ENCODE measurements at regions of chr16 and their contacts with region 1.

Region 1: GRCh38 chr16:78503602-78504001 is 404.1 kb downstream of the WWOX start:
- DNase-seq: peak in 1 of 2 experiments; percentile 20
- H3K4me3 ChIP-seq: no peak overlapping the region
- H3K27ac ChIP-seq: no peak overlapping the region
- H3K4me1 ChIP-seq: no peaks in the 10 kb centered on the region
- H3K27me3 ChIP-seq: no peaks in the 10 kb centered on the region
- CTCF ChIP-seq: peak; percentile 89

Region 2: GRCh38 chr16:78310196-78310595 is 193.4 kb before region 1 on chr16:
- CTCF ChIA-PET with region 1: interaction called, 12 read pairs
- POLR2A ChIA-PET with region 1: no interaction called
- intact Hi-C with region 1: no loop called
- DNase-seq: no peak
- H3K4me3 ChIP-seq: no peak overlapping the region
- H3K27ac ChIP-seq: no peak overlapping the region
- H3K4me1 ChIP-seq: peaks cover 19% of the 10 kb centered on the region
- H3K27me3 ChIP-seq: no peaks in the 10 kb centered on the region
- CTCF ChIP-seq: no peak

Region 3: DNA sequence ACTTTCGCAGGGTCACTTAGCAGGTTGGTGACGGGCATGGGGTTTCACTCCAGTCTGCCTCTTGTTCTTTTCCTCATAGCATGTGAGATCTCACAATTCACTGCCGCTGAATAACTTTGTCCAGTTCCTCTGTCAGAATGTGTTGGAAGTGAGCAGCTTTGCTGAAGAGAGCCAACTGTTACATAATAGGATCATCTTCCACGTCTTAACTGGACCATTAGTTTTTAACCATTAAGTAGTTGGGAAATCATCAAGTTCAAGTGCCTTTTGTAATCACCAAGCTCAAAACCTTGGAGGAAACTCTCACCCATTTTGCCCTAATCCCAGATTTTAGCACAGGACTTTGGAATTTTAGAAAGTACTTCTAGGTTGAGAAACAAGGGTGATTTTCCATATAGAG is 113.5 kb before region 1 on chr16:
- CTCF ChIA-PET with region 1: interaction called, 23 read pairs
- POLR2A ChIA-PET with region 1: no interaction called
- intact Hi-C with region 1: no loop called
- DNase-seq: no peak
- H3K4me3 ChIP-seq: no peak overlapping the region
- H3K27ac ChIP-seq: no peak overlapping the region
- H3K4me1 ChIP-seq: no peaks in the 10 kb centered on the region
- H3K27me3 ChIP-seq: no peaks in the 10 kb centered on the region
- CTCF ChIP-seq: no peak

Region 4: GRCh38 chr16:78522327-78522726 is 18.7 kb after region 1 on chr16:
- CTCF ChIA-PET with region 1: no interaction called
- POLR2A ChIA-PET with region 1: no interaction called
- intact Hi-C with region 1: no loop called
- DNase-seq: no peak
- H3K4me3 ChIP-seq: no peak overlapping the region
- H3K27ac ChIP-seq: no peak overlapping the region
- H3K4me1 ChIP-seq: no peaks in the 10 kb centered on the region
- H3K27me3 ChIP-seq: no peaks in the 10 kb centered on the region
- CTCF ChIP-seq: no peak

Region 5: DNA sequence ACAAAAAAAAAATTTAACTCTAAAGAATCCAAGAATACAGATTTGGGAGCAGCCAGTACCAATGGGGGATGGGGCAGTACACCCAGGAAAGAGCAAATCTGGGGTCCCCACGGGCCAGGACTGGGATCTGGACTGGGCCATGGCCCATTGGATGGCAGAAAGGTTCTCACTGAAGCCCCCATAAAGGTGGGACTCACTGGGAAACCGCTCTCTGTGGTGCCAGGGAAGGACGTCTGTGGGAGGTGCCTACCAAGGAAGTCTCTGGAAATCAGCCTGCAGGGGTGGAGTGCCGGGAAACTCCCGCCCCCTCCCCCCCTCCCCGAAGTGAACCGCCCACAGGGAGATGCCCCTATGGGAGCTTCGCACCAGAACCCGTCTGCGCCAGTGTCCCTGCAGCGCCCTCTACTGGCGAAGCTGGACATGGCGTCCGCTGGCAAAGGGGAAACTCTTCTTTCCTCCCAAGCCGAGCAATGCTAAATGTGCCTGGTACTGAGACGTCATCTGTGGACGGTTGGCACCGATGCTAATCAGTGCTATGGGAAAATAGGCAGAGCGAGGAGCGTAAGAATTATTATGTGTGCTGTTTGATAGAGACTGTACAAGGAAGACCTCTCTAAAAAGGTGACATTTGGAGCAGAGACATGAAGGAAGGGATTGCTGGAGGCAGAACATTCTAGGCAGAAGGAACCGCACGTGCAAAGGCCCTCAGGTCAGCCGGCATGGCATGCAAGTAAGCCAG is 266.9 kb after region 1 on chr16:
- CTCF ChIA-PET with region 1: no interaction called
- POLR2A ChIA-PET with region 1: no interaction called
- intact Hi-C with region 1: loop called (anchors 1 kb)
- DNase-seq: peak in 1 of 2 experiments; percentile 35
- H3K4me3 ChIP-seq: no peak overlapping the region
- H3K27ac ChIP-seq: no peak overlapping the region
- H3K4me1 ChIP-seq: no peaks in the 10 kb centered on the region
- H3K27me3 ChIP-seq: no peaks in the 10 kb centered on the region
- CTCF ChIP-seq: peak; percentile 58

Region 6: DNA sequence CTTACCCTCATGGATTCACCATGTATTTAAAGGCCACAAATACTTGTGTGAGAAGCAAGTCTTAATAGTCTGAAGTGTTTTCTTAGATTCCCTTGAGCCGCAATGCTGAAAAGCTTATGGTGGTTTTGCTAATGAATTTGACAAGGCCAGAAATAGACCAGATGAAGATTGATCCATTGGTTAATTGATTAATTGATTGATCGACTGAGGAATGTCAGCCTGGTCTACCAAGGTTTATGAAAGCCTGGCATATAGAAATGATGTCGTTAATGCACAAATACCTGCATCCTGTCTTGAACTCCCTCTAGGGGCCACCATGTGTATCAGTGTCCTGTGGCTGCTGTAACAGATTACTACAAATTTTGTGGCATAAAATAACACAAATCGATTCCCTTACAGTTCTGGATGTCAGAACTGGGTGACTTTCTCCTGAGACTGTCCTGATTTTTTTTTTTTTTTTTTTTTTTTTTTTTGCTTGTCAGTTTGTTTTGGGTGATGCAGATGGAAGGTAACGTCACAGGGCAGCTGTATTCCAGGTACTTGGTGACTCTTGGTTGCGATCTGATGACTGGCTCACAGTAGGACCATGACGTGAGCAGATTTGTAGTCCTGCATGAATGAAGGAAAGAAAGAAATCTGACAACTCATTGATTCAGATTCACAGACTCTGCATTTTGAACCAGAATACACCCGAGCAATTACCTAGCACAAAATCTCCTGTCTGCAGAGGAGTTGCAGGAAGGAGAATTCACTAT is 543.8 kb after region 1 on chr16:
- CTCF ChIA-PET with region 1: no interaction called
- POLR2A ChIA-PET with region 1: no interaction called
- intact Hi-C with region 1: loop called (anchors 2 kb)
- DNase-seq: no peak
- H3K4me3 ChIP-seq: no peak overlapping the region
- H3K27ac ChIP-seq: no peak overlapping the region
- H3K4me1 ChIP-seq: no peaks in the 10 kb centered on the region
- H3K27me3 ChIP-seq: no peaks in the 10 kb centered on the region
- CTCF ChIP-seq: peak; percentile 64

Region 7: GRCh38 chr16:79261481-79261940 is 757.9 kb after region 1 on chr16:
- CTCF ChIA-PET with region 1: no interaction called
- POLR2A ChIA-PET with region 1: no interaction called
- intact Hi-C with region 1: loop called (anchors 2 kb)
- DNase-seq: peak in 1 of 2 experiments; percentile 10
- H3K4me3 ChIP-seq: no peak overlapping the region
- H3K27ac ChIP-seq: no peak overlapping the region
- H3K4me1 ChIP-seq: no peaks in the 10 kb centered on the region
- H3K27me3 ChIP-seq: peaks cover 11% of the 10 kb centered on the region
- CTCF ChIP-seq: peak; percentile 49